Psoas muscle (tissue), 8 donors: ENCODE measurements at regions of chr3 and their contacts with region 1.

Region 1: DNA sequence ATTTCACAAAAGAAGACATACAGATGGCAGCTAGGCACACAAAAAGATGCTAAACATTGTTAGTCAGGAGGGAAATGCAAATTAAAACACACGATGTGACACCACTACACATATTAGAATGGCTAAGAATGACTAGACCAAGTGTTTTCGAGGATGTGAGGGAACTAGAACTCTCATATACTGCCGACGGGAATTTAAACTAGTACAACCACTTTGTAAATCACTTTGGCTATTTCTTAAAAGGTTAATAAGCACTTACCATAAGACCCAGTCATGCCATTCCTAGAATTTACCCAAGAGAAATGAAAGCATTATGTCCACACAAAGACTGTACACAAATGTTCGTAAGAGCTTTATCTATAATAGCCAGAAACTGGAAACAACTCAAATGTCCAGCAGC is 5.6 kb downstream of the CEP70 start:
- DNase-seq: no peak
- ATAC-seq: no peak
- H3K4me3 ChIP-seq: no peak overlapping the region
- H3K27ac ChIP-seq: no peak overlapping the region
- H3K4me1 ChIP-seq: no peaks in the 10 kb centered on the region
- H3K27me3 ChIP-seq: no peaks in the 10 kb centered on the region
- CTCF ChIP-seq: no peak

Region 2: DNA sequence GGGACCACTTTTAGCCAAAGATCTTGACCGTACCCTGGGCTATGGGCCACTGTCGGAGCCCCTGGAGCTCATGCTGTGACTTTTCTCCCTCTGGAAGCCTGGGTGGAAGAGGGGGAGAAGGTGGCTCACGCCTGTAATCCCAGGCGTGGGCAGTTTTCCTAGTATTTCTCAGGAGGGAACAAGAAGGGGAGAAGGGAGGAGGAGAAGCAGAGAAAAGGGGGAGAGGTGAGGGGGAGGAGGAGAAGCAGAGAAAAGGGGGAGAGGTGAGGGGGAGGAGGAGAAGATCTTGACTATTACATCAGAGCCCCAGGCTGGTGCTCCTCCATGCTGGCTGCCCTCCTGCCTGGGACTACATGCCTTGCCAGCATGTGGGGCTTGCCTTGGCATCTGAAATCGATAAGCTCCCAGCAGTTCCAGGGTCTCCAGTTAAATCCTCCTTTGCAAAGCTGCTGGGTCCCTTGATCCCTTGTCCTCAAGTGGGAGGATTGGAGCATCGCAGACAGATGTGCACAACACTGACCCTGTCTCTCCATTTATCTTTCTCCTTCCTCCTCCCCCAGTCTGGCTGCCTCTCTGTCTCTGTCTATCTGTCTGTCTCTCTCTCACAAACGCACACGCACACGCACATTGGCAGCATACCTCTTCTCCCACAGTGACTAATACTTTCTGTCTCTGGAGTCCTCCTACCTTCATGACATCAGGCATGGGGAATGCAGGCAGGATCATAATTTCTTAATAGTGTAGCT is 198.4 kb before region 1 on chr3:
- intact Hi-C with region 1: no loop called
- DNase-seq: peak; percentile 53 to 67
- ATAC-seq: peak; percentile 93 to 98 (median 95)
- H3K4me3 ChIP-seq: peak overlapping the region; percentile 19
- H3K27ac ChIP-seq: peak overlapping the region; percentile 72
- H3K4me1 ChIP-seq: peaks cover 40% of the 10 kb centered on the region
- H3K27me3 ChIP-seq: no peaks in the 10 kb centered on the region
- CTCF ChIP-seq: no peak

Region 3: GRCh38 chr3:138434276-138434874 is 154.1 kb before region 1 on chr3 and contains the start of gene ESYT3:
- intact Hi-C with region 1: loop called in 1 of 2 experiments (anchors 10 kb)
- DNase-seq: peak; percentile 73 to 83
- ATAC-seq: peak; percentile 86 to 93 (median 90)
- H3K4me3 ChIP-seq: peak within 1 kb of the TSS; percentile 67
- H3K27ac ChIP-seq: peak within 1 kb of the TSS; percentile 30
- H3K4me1 ChIP-seq: peaks cover 7% of the 10 kb centered on the region
- H3K27me3 ChIP-seq: peaks cover 0 to 3% (median 0%) of the 10 kb centered on the region in 3 donors
- CTCF ChIP-seq: no peak
- total RNA-seq, gene ESYT3: 1.2 to 4.5 (median 2.3) TPM